ENCODE measurements at regions of chr4 and their contacts with region 1.

Region 1: DNA sequence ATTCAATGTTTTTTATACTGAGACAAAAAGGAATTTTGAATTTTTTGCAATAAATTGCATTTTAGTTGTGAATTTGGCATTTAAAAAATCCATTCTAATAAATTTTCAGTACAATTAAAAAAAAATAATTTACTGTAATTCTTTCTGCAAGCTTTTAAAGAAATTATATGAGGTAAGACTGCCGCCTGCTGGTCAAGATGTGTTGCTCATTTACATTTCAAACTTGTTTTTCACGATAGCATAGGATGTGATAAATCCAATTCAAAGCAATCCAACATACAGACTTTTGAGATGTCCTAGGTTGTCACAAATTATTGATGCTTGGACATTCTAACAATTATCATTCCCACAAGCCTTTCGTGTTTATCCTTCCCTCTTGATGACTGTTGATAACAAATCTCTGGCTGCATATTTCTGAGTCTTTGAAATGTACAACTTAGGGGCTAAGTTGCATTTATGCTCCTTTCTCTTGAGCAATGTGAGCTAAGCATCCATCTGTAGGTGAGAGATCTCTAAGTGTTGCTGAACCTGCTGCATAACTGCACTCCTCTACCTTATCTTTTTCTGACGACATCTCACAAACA is 21.7 kb upstream of the MFAP3L start:
- DNase-seq: peak in 4 of 5 donors; percentile 35 to 45 (median 40)
- H3K4me3 ChIP-seq: no peak overlapping the region
- H3K27ac ChIP-seq: no peak overlapping the region
- H3K4me1 ChIP-seq: no peaks in the 10 kb centered on the region
- H3K27me3 ChIP-seq: no peaks in the 10 kb centered on the region
- CTCF ChIP-seq: peak in 2 of 3 donors; percentile 16 to 52
- EP300 ChIP-seq: no peak
- POLR2A ChIP-seq: no peak

Region 2: DNA sequence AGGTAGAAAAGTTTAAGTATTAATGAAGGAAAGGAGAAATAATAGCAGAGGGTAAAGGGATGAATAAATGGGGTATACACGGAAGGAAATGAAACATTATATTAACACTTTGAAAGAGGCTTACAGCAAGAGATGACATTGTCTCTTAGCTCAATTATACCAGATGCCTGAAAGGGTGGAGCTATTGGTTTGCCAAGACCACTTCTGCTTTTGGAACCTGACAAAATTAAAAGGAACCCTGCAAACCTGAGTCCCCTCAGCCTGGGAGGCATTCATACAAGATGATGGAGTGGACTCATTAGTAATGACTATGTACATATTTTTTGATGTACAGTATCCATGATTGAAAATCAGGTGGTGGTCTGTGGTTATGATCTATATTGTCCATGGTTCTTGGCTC is 245.0 kb before region 1 on chr4:
- intact Hi-C with region 1: loop called in 1 of 4 experiments (anchors 10 kb)
- DNase-seq: no peak
- H3K4me3 ChIP-seq: no peak overlapping the region
- H3K27ac ChIP-seq: no peak overlapping the region
- H3K4me1 ChIP-seq: no peaks in the 10 kb centered on the region
- H3K27me3 ChIP-seq: no peaks in the 10 kb centered on the region
- CTCF ChIP-seq: no peak
- EP300 ChIP-seq: no peak
- POLR2A ChIP-seq: no peak

Region 3: DNA sequence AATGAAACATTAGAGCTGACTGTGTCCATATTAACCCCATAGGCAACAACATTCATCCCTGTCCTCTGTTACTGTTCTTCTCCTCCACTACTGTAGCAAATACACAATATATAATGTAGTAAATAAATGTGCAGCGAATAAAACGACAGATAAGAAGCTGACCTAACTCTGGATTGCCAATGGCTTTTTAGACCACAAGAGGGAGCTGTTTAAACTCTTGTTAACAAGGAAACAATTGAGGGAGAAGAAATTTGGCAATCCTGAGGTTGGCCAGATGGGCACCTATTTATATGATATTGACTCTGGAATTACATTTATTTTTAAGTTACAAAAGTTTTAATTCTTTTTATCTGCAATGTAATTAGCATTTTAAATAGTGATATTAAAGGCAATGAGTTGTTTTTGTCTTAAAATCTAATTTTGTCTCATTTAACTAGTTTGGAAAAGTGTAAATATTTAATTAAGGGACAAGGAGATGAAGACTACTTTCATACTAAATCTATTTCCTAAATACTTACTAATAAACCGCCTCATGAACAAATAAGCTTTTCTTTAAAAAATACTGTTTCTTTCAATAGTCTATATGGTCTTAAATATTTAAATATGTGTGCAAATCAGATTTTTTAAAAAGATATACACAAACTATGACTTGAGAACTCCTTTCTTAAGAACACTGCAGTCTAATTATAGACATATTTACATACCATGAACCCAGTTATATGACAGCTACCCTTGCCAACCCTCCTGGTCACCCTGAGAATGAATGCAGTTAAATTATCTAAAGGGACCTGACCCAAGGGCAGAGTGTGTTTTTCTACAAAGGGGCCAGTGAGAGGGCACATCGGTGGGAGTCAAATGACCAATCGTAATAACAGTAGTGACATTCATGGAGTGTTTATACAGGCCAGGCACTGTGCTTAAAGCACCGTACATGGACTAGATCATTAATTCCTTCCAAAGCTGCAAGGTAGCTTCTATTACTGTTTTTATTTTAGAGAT is 237.2 kb before region 1 on chr4:
- intact Hi-C with region 1: loop called (anchors 5 to 10 kb)
- DNase-seq: no peak
- H3K4me3 ChIP-seq: no peak overlapping the region
- H3K27ac ChIP-seq: no peak overlapping the region
- H3K4me1 ChIP-seq: no peaks in the 10 kb centered on the region
- H3K27me3 ChIP-seq: no peaks in the 10 kb centered on the region
- CTCF ChIP-seq: peak; percentile 49 to 63 (median 53)
- EP300 ChIP-seq: no peak
- POLR2A ChIP-seq: no peak

Measured in ovary (tissue), 10 donors.